Transverse colon (tissue), 4 donors: ENCODE measurements at regions of chr15 and their contacts with region 1.

Region 1: DNA sequence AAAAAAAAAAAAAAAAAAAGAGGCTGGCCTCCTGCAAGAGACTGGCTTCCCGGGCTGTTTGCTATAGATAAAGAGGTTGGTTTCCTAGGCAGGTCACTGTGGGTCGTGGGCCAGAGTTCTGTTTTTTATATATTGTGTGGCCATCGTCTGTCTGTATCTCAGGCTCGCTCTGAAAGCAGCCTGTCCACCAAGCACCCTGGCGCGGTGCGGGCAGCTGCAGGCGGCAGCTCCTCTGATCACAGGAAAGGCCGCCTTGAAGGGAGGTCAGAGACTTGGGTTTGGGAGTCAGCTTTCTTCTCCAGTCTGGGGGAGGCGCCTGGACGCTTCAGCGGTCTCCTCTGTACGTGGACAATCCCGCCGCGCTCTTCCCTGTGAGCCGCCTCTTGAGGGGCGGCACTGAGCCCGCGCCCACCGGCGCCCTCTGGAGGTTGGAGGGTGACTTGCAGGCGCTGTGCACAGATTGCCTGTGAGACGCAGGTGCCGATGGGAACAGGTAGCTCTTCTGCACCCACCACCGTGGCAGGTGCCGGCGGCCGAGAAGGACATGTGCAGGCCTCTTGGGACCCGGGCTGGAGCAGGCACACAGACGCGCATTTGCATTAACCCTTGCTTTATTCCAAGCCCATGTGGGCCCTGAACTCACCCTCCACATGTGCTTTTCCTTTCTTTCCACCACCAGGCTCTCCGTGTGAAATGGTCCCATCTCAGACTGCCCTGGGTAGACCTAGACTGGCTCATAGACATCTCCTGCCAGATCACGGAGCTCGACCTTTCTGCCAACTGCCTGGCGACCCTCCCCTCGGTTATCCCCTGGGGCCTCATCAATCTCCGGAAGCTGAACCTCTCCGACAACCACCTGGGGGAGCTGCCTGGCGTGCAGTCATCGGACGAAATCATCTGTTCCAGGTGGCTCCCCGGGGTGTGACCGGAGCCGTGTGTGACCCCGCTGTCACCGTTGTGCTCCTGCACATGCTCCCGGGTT is 89.3 kb downstream of the LRRK1 start:
- DNase-seq: peak; percentile 91
- H3K4me3 ChIP-seq: peak overlapping the region; percentile 7 to 63 (median 42)
- H3K27ac ChIP-seq: peak overlapping the region; percentile 53 to 77 (median 64)
- H3K4me1 ChIP-seq: peaks cover 8 to 24% (median 13%) of the 10 kb centered on the region in 4 donors
- H3K27me3 ChIP-seq: no peaks in the 10 kb centered on the region
- CTCF ChIP-seq: peak; percentile 94 to 100 (median 97)
- EP300 ChIP-seq: no peak
- POLR2A ChIP-seq: no peak

Region 2: DNA sequence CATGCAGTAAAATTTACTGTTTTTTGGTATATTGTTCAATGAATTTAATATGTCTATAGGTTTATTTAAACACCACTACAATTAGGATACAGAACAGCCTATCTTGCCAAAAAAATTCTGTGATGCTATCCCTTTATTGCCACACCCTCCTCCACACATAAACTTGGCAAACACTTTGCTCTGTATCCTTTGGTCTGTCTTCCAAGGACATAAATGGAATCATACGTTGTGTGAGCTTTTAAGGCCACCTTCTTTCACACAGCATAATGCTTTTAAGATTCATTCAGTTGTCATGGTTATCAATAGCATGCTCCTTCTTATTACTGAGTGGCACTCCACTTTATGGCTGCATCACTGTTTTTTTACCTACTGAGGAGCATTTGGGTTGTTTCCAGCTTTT is 551.2 kb before region 1 on chr15:
- in situ Hi-C with region 1: no loop called
- intact Hi-C with region 1: no loop called
- DNase-seq: no peak
- H3K4me3 ChIP-seq: no peak overlapping the region
- H3K27ac ChIP-seq: no peak overlapping the region
- H3K4me1 ChIP-seq: no peaks in the 10 kb centered on the region
- H3K27me3 ChIP-seq: no peaks in the 10 kb centered on the region
- CTCF ChIP-seq: no peak
- EP300 ChIP-seq: no peak
- POLR2A ChIP-seq: no peak

Region 3: DNA sequence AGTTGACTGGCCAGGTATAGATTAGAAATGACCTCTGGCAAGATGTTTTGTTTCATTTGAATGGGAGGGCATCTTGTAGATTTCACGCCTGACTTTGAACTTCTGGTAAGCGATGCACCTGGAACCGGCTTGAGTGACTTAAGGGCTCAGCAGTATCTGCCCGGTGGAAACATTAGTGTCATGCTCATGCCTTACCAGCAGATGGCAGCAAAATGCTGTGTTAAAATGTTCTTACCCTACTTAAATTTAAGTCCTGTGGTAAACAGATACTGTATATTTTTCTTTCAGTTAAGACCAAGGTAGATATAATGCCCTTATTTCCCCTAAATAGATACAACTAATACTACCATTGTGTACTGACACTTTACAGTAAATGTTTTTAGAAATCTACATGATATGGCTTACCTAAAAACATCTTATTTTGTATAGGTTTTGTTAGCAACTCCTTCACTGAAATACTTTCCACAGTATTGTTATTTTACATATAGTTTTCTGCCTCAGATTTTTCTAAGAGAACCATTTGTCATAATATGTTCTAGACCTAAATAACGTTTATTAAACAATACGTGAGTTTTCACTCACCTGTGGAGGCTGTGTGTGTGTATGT is 380.6 kb before region 1 on chr15:
- in situ Hi-C with region 1: loop called (anchors 10 kb)
- intact Hi-C with region 1: loop called (anchors 2 kb)
- DNase-seq: peak; percentile 70
- H3K4me3 ChIP-seq: no peak overlapping the region
- H3K27ac ChIP-seq: no peak overlapping the region
- H3K4me1 ChIP-seq: no peaks in the 10 kb centered on the region
- H3K27me3 ChIP-seq: no peaks in the 10 kb centered on the region
- CTCF ChIP-seq: peak; percentile 83 to 85 (median 84)
- EP300 ChIP-seq: no peak
- POLR2A ChIP-seq: no peak

Region 4: GRCh38 chr15:100635406-100636071 is 372.9 kb before region 1 on chr15:
- in situ Hi-C with region 1: loop called in 2 of 4 experiments (anchors 10 kb)
- intact Hi-C with region 1: no loop called
- DNase-seq: peak; percentile 31
- H3K4me3 ChIP-seq: no peak overlapping the region
- H3K27ac ChIP-seq: no peak overlapping the region
- H3K4me1 ChIP-seq: peaks cover 4 to 42% (median 22%) of the 10 kb centered on the region in 4 donors
- H3K27me3 ChIP-seq: no peaks in the 10 kb centered on the region
- CTCF ChIP-seq: no peak
- EP300 ChIP-seq: no peak
- POLR2A ChIP-seq: no peak

Region 5: GRCh38 chr15:100918034-100918689 is 90.3 kb before region 1 on chr15:
- in situ Hi-C with region 1: loop called in 3 of 4 experiments (anchors 5 to 25 kb)
- intact Hi-C with region 1: loop called (anchors 2 kb)
- DNase-seq: peak; percentile 90
- H3K4me3 ChIP-seq: peak overlapping the region; percentile 53 to 78 (median 74)
- H3K27ac ChIP-seq: peak overlapping the region; percentile 84 to 90 (median 85)
- H3K4me1 ChIP-seq: peaks cover 4 to 30% (median 8%) of the 10 kb centered on the region in 4 donors
- H3K27me3 ChIP-seq: no peaks in the 10 kb centered on the region
- CTCF ChIP-seq: peak; percentile 93 to 98 (median 97)
- EP300 ChIP-seq: no peak
- POLR2A ChIP-seq: peak; percentile 48

Region 6: DNA sequence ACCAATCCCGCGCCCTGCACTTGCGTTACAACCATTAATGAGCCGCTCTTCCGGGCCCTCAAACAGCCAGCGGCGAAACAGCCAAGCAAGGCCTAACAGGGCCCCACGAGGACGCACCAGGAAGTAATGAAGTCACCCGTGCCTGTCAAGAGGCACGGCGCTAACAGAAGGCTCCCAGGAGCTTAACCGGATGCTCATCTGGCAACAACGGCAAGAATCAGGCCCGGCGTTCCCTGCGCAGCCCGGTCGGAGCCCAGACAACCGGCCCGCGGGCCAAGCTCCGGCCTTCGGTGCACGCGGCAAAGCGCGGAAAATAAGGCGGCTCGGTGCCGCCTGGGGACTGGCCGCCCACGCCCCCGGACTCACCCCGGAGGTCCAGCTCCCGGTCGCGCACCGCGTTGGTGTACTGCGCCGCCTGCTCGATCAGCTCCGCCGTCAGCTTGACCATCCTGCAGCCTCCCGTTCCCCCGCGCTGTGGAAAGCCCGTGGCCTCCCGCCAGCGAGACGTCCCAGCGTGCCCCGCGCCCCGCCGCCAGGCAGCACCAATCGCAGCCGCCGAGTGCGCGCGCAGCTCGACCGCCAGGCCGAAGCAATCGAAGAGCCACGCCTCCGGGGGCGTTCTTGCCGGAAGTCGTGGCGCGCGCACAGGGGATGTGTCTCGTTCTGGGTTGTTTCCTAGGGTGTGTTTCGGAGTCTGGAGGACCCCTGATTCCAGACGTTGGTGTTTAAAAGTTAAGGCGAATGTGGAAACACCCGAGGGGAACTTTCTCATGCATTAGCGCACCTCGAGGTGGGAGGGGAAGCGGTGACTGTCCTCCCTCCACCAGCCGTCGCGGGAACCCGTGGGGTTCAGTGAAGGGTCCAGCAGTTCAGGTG is 286.5 kb after region 1 on chr15 and contains the start of gene SNRPA1:
- in situ Hi-C with region 1: no loop called
- intact Hi-C with region 1: no loop called
- DNase-seq: peak; percentile 98
- H3K4me3 ChIP-seq: peak within 1 kb of the TSS; percentile 80 to 92 (median 90)
- H3K27ac ChIP-seq: peak within 1 kb of the TSS; percentile 92 to 99 (median 98)
- H3K4me1 ChIP-seq: peaks cover 12 to 44% (median 22%) of the 10 kb centered on the region in 4 donors
- H3K27me3 ChIP-seq: no peaks in the 10 kb centered on the region
- CTCF ChIP-seq: peak in 1 of 5 experiments; percentile 5
- EP300 ChIP-seq: no peak
- POLR2A ChIP-seq: peak; percentile 85
- total RNA-seq, gene SNRPA1: 7.8 to 54.0 (median 25.8) TPM